Ascending aorta (tissue), 2 donors: ENCODE measurements at regions of chr2 and their contacts with region 1.

Region 1: DNA sequence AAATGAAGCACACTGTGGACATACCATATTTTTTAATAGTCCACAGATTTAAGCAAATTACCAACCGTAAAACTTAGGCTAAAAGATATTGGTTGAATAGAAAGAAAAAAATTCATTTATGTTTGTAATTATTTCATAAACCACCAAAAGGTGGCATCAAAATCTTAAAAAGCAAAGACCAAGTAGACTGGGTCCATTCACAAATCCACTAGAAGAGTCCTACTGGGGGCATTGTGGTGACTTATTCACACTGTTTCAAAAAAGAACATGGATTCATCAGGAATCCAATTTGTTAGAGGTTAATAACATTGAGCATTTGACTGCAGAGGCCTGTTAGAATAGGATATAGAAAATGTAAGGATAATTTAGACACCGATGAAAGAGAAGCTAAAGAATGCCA is 194.9 kb upstream of the KYNU start:
- DNase-seq: no peak
- H3K4me3 ChIP-seq: no peak overlapping the region
- H3K27ac ChIP-seq: no peak overlapping the region
- H3K4me1 ChIP-seq: no peaks in the 10 kb centered on the region
- H3K27me3 ChIP-seq: no peaks in the 10 kb centered on the region
- CTCF ChIP-seq: peak in 1 of 3 experiments; percentile 29

Region 2: GRCh38 chr2:142716463-142717242 is 34.1 kb after region 1 on chr2:
- intact Hi-C with region 1: no loop called
- DNase-seq: no peak
- H3K4me3 ChIP-seq: no peak overlapping the region
- H3K27ac ChIP-seq: peak overlapping the region in 1 of 2 donors; percentile 36
- H3K4me1 ChIP-seq: no peaks in the 10 kb centered on the region
- H3K27me3 ChIP-seq: no peaks in the 10 kb centered on the region
- CTCF ChIP-seq: no peak

Region 3: GRCh38 chr2:142980561-142981378 is 298.2 kb after region 1 on chr2:
- intact Hi-C with region 1: loop called (anchors 5 kb)
- DNase-seq: no peak
- H3K4me3 ChIP-seq: no peak overlapping the region
- H3K27ac ChIP-seq: no peak overlapping the region
- H3K4me1 ChIP-seq: no peaks in the 10 kb centered on the region
- H3K27me3 ChIP-seq: no peaks in the 10 kb centered on the region
- CTCF ChIP-seq: peak in 1 of 3 experiments; percentile 45